Naive thymus-derived CD8-positive, alpha-beta T cell (primary cell): ENCODE measurements at regions of chr15 and their contacts with region 1.

Region 1: DNA sequence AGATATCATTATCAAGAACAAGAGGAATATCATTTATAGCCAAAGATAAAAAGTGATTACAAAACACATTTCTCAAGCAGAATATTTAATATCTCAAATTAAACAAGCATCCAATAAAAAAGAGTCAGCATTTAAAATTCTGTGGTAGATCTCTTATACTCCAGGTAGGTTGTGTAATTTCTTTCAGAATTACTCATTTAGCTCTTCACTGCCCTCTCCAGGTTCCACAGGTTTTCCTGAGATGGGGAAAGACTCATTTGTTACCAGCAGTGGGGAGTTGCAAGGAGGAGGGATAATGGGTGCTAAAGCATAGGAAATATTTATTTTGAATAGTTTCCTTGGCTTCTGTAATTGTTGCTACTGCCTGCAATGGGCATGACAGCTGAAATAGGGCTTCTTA is 83.1 kb upstream of the RASGRP1 start:
- DNase-seq: no peak
- ATAC-seq: no peak
- H3K4me3 Mint-ChIP-seq: peak overlapping the region in 5 of 10 donors; percentile 33 to 76 (median 61)
- H3K27ac Mint-ChIP-seq: peak overlapping the region in 9 of 10 donors; percentile 56 to 98 (median 94)
- H3K4me1 Mint-ChIP-seq: peaks cover 27 to 78% (median 74%) of the 10 kb centered on the region in 4 donors
- H3K27me3 Mint-ChIP-seq: no peaks in the 10 kb centered on the region

Region 2: GRCh38 chr15:38589502-38589901 is 58.2 kb before region 1 on chr15:
- POLR2A ChIA-PET with region 1: no interaction called
- DNase-seq: no peak
- ATAC-seq: no peak
- H3K4me3 Mint-ChIP-seq: no peak overlapping the region
- H3K27ac Mint-ChIP-seq: peak overlapping the region in 3 of 10 donors; percentile 2 to 62 (median 31)
- H3K4me1 Mint-ChIP-seq: peaks cover 0 to 36% (median 30%) of the 10 kb centered on the region in 4 donors
- H3K27me3 Mint-ChIP-seq: no peaks in the 10 kb centered on the region

Region 3: DNA sequence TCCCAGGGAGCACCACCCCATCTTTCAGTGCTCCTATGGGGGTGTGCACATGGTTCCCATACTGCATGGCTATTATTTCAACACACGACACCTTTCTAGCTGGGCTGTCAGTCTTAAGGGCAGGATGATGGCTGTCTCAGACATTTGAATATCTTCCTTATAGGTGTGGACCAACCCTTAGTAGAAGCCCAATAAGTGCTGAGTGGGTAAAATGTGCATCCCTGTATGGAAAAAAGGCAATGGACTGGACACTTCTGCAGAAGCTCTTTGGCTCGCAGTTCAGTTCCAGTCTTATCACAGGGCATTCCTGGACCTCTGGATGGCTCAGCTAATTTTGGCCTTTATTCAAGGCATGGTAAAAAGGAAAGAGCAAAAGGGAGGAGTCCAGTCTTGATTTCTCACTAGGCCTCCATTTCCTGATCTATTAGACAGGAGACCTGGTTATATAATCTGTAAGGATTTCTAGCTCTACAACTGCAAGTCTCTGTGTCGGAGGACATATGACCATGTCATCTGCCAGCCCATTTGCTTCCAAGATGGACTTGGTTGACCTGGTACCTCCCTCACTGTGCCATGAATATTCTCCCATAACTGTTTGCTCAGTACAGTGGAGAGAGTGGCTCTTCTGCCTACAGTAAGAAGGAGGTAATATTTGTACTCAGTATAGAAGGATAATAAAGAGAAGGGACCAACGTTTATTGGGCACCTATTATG is 29.3 kb before region 1 on chr15:
- POLR2A ChIA-PET with region 1: interaction called, 11 read pairs
- DNase-seq: no peak
- ATAC-seq: no peak
- H3K4me3 Mint-ChIP-seq: no peak overlapping the region
- H3K27ac Mint-ChIP-seq: peak overlapping the region in 1 of 10 donors; percentile 73
- H3K4me1 Mint-ChIP-seq: peaks cover 13 to 38% (median 29%) of the 10 kb centered on the region in 4 donors
- H3K27me3 Mint-ChIP-seq: no peaks in the 10 kb centered on the region

Region 4: GRCh38 chr15:38631126-38632075 is 16.3 kb before region 1 on chr15:
- POLR2A ChIA-PET with region 1: interaction called, 19 read pairs
- DNase-seq: peak in 1 of 10 donors; percentile 8
- ATAC-seq: peak in 1 of 2 donors; percentile 23
- H3K4me3 Mint-ChIP-seq: peak overlapping the region in 8 of 10 donors; percentile 0 to 38 (median 14)
- H3K27ac Mint-ChIP-seq: peak overlapping the region; percentile 2 to 84 (median 44)
- H3K4me1 Mint-ChIP-seq: peaks cover 18 to 34% (median 25%) of the 10 kb centered on the region in 4 donors
- H3K27me3 Mint-ChIP-seq: no peaks in the 10 kb centered on the region

Region 5: DNA sequence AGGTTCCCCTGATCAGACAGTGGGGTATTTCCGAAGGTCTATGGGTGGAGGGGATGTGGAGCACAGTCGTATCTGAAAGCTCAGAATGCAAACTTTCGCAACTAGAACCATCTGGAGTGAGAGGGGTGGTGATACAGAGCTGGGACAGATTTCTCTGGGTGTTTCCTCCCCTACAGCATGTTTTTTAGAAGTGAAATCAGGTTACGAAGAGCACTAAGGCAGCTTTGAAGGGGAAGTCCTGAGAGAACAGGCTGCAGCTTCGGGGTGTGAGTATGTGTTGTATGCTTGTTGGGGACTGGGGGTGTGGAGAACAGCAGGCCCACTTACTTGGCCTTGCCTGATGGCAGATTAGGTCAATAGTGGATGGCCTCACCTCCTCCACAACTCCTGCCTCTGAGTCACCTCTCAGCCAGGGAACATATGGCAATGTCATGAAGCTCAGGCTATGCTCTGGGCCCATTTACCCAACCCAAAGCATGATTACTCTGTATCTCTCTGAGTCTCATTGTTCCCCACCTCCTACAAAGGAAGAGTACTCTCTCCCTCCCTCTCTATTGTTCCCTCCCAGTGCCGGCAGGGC is 24.1 kb after region 1 on chr15:
- POLR2A ChIA-PET with region 1: interaction called, 269 read pairs
- DNase-seq: peak in 8 of 10 donors; percentile 38 to 73 (median 55)
- ATAC-seq: peak; percentile 52 to 70
- H3K4me3 Mint-ChIP-seq: peak overlapping the region; percentile 46 to 79 (median 70)
- H3K27ac Mint-ChIP-seq: peak overlapping the region; percentile 91 to 99 (median 98)
- H3K4me1 Mint-ChIP-seq: peaks cover 42 to 83% (median 77%) of the 10 kb centered on the region in 4 donors
- H3K27me3 Mint-ChIP-seq: no peaks in the 10 kb centered on the region

Region 6: GRCh38 chr15:38683382-38684242 is 35.9 kb after region 1 on chr15:
- POLR2A ChIA-PET with region 1: interaction called, 161 read pairs
- DNase-seq: peak; percentile 41 to 82 (median 68)
- ATAC-seq: peak; percentile 46 to 51
- H3K4me3 Mint-ChIP-seq: peak overlapping the region in 9 of 10 donors; percentile 3 to 81 (median 61)
- H3K27ac Mint-ChIP-seq: peak overlapping the region; percentile 83 to 97 (median 94)
- H3K4me1 Mint-ChIP-seq: peaks cover 49 to 76% (median 72%) of the 10 kb centered on the region in 4 donors
- H3K27me3 Mint-ChIP-seq: no peaks in the 10 kb centered on the region